PC-9 (cell line): ENCODE measurements at regions of chr1 and their contacts with region 1.

Region 1: DNA sequence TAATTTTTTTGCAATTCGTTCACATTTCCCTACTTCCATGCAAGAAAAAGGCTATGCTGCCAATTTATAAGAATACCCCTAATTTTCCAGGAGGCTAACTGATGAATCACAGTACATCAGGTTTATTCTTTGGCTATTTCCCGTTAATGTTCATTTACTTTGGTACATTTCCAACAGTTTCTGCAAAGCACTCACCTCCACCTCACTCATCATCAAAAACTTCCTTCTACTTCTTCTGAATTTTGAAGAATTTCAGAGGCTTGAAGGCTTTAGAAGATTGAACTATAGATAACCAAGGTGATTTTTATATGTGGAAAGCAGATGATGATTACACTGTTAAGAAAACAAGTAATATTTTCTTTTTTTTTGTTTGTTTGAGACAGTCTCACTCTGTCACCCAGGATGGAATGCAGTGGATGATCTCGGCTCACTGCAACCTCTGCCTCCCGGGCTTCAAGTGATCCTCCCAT is 60.5 kb upstream of the HP1BP3 start:
- DNase-seq: peak in 1 of 2 experiments; percentile 65
- H3K4me3 ChIP-seq: no peak overlapping the region
- H3K27ac ChIP-seq: no peak overlapping the region
- H3K4me1 ChIP-seq: 0 out of 2 replicates have a peak, but pooled peaks cover 9% of the 10 kb centered on the region
- H3K27me3 ChIP-seq: no peaks in the 10 kb centered on the region
- CTCF ChIP-seq: no peak

Region 2: DNA sequence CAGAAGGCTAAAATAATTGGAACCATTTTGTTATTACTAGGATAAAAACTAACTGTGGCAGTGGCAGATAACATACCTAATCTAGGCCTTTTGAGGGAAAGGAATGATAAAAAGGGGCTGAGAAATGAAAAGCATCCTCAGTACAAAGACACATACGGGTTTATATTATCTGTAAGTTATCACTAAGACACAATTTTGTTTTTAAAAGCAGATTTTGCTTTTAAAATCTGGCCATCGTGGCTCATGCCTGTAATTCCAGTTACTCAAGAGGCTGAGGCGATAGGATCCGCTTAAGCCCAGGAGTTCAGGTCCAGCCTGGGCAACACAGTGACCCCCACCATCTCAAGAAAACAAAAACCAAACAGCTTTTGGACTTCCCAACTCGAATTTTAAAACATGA is 35.7 kb before region 1 on chr1:
- CTCF ChIA-PET with region 1: interaction called, 24 read pairs
- POLR2A ChIA-PET with region 1: no interaction called
- intact Hi-C with region 1: no loop called
- DNase-seq: no peak
- H3K4me3 ChIP-seq: no peak overlapping the region
- H3K27ac ChIP-seq: no peak overlapping the region
- H3K4me1 ChIP-seq: no peaks in the 10 kb centered on the region
- H3K27me3 ChIP-seq: no peaks in the 10 kb centered on the region
- CTCF ChIP-seq: no peak